ENCODE measurements at regions of chr5 and their contacts with region 1.

Region 1: GRCh38 chr5:136080483-136081216 is 51.9 kb downstream of the TGFBI start:
- DNase-seq: peak; percentile 89
- ATAC-seq: peak; percentile 91 to 97

Region 2: DNA sequence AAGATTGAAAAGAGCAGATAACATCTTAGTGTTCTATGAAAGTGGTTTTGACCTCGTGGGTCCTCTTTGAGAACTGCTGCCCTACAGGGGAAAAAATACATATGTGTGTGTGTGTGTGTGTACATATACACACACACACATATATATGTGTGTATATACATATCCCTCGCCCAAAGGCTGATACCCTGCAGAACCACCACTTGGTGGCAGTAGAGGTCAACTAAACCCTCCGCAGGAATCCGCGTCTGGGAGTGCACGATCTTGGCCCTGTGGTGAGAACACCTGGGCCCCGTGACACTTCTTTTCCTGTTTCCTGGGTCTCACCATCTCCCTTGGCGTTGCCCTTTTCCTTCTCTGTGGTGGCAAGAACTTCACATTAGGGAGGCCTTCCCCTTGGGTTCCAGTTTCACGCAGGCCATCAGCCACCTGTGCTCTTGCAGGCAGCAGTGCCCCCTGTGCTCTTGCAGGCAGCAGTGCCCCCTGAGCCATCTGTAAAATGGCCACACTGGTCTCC is 193.2 kb before region 1 on chr5:
- intact Hi-C with region 1: loop called in 1 of 2 experiments (anchors 5 kb)
- DNase-seq: peak; percentile 38
- ATAC-seq: peak; percentile 78 to 88

Region 3: GRCh38 chr5:135977375-135977928 is 103.2 kb before region 1 on chr5:
- intact Hi-C with region 1: loop called in 1 of 2 experiments (anchors 5 kb)
- DNase-seq: peak; percentile 78
- ATAC-seq: peak; percentile 91 to 94

Region 4: GRCh38 chr5:136174021-136174659 is 93.5 kb after region 1 on chr5:
- intact Hi-C with region 1: loop called in 1 of 2 experiments (anchors 5 kb)
- DNase-seq: no peak
- ATAC-seq: peak in 1 of 2 donors; percentile 52

Measured in left cardiac atrium (tissue), 4 donors.